ENCODE measurements at regions of chr20 and their contacts with region 1.

Region 1: GRCh38 chr20:56875046-56875551 is 246.0 kb downstream of the TFAP2C start:
- DNase-seq: no peak
- ATAC-seq: no peak
- H3K4me3 ChIP-seq: no peak overlapping the region
- H3K27ac ChIP-seq: no peak overlapping the region
- H3K4me1 ChIP-seq: no peaks in the 10 kb centered on the region
- H3K27me3 ChIP-seq: no peaks in the 10 kb centered on the region
- CTCF ChIP-seq: no peak

Region 2: DNA sequence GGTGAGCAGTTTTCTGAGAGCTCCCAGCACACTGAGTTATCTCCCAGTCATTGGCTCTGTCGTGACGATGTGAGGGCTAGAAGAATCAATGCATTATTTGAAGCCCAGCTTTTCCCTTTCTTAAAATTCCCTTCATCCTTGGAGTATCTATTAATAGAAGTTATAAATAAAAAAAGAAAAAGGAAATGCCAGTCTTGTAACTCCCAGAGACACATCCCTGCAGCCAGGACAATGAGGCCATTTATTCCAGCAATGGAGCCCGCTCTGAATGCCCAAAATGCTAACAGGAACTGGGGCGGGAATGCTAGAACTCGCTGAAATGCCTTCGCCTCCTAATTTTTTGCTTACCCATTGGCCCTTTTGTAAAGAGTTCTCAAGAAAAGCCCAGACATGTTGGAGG is 59.8 kb after region 1 on chr20:
- intact Hi-C with region 1: loop called in 1 of 2 experiments (anchors 10 kb)
- DNase-seq: no peak
- ATAC-seq: no peak
- H3K4me3 ChIP-seq: no peak overlapping the region
- H3K27ac ChIP-seq: no peak overlapping the region
- H3K4me1 ChIP-seq: no peaks in the 10 kb centered on the region
- H3K27me3 ChIP-seq: peaks cover 0 to 21% (median 0%) of the 10 kb centered on the region in 3 donors
- CTCF ChIP-seq: no peak

Measured in psoas muscle (tissue), 8 donors.